ENCODE measurements at regions of chr15 and their contacts with region 1.

Region 1: DNA sequence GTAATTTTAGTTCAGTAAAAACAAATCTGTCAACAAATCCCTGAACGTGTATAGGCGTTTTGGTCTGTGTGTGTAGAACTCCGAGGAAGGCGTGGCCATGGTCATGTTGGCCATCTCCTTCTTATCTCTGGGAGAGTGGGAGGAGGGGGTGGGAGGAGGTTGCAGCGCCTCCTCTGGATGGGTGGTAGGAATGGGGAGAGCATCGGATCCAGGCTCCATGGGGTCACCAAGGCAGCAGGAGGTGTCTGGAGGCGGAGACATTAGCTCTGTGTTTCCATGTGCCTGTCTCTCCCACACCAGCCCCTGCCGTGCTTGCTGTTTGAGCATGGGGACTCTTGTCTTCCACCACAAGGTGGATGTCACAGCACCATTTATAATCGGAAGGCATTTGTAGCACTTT is 34.5 kb upstream of the TRPM1 start:
- DNase-seq: no peak
- H3K4me3 ChIP-seq: no peak overlapping the region
- H3K27ac ChIP-seq: no peak overlapping the region
- H3K4me1 ChIP-seq: no peaks in the 10 kb centered on the region
- H3K27me3 ChIP-seq: no peaks in the 10 kb centered on the region
- CTCF ChIP-seq: no peak
- EP300 ChIP-seq: no peak
- POLR2A ChIP-seq: no peak

Region 2: DNA sequence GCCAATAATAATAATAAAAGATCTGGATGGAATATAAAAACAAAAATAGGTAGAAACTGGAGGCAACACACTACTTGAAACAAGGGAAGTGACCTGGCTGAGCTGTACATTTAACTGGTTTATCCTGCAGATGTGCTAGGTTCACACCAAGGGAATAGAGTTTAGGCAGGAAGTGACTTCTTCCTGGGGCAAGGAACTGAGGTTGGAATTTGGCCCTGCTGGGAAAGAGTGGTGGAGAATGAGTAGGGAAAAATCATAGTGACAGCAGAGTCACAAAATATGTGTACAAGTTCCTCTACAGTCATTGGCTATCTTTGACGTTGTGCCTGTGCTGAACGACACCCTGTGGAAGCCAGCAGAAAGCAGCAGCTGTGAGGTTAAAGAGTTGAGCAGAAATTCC is 466.0 kb before region 1 on chr15:
- intact Hi-C with region 1: loop called (anchors 10 kb)
- DNase-seq: no peak
- H3K4me3 ChIP-seq: no peak overlapping the region
- H3K27ac ChIP-seq: no peak overlapping the region
- H3K4me1 ChIP-seq: no peaks in the 10 kb centered on the region
- H3K27me3 ChIP-seq: no peaks in the 10 kb centered on the region
- CTCF ChIP-seq: no peak
- EP300 ChIP-seq: no peak
- POLR2A ChIP-seq: no peak

Region 3: DNA sequence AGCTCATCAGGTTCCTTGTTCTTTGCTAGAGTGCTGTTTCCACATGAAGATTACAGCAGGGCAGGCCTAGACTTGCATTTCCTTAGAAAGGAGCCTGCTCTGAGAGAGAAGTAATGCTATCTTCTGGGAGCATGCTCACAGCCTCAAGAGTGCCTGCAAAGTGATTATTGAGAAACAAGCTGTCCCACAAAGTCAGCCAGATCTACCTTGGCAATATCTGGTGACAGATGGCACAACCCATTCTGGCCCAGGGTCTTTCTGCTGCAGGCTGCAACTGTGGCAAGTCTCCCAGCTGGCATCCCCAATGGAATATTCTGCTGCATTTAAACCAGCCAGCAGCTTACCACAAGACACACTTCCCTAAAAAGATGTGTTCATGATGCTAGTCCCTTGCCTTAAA is 173.9 kb before region 1 on chr15:
- intact Hi-C with region 1: no loop called
- DNase-seq: no peak
- H3K4me3 ChIP-seq: no peak overlapping the region
- H3K27ac ChIP-seq: no peak overlapping the region
- H3K4me1 ChIP-seq: peaks cover 0 to 7% (median 0%) of the 10 kb centered on the region in 4 donors
- H3K27me3 ChIP-seq: no peaks in the 10 kb centered on the region
- CTCF ChIP-seq: no peak
- EP300 ChIP-seq: no peak
- POLR2A ChIP-seq: no peak

Region 4: DNA sequence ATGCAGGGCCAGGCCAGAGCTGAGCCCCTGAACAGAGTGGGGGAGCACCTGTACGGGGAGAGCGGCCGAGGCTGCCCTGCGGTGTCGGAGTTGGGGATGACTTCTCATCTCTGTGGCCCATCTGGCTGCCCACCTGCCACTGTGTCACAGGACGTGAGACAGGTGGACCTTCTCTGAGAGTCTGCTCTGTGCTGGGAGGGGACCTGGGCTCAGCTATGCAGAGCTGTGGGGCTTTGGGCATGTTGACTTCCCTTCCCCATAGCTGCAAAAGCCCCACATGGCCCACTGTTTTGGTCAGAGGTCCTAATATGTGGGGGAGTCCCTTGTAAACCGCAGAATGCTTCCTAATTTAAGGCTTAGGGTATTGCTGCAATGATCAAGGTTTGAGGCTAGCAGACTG is 33.5 kb after region 1 on chr15:
- intact Hi-C with region 1: no loop called
- DNase-seq: no peak
- H3K4me3 ChIP-seq: no peak overlapping the region
- H3K27ac ChIP-seq: no peak overlapping the region
- H3K4me1 ChIP-seq: no peaks in the 10 kb centered on the region
- H3K27me3 ChIP-seq: no peaks in the 10 kb centered on the region
- CTCF ChIP-seq: no peak
- EP300 ChIP-seq: no peak
- POLR2A ChIP-seq: no peak